HEK293 (cell line): ENCODE measurements at regions of chr10 and their contacts with region 1.

Region 1: DNA sequence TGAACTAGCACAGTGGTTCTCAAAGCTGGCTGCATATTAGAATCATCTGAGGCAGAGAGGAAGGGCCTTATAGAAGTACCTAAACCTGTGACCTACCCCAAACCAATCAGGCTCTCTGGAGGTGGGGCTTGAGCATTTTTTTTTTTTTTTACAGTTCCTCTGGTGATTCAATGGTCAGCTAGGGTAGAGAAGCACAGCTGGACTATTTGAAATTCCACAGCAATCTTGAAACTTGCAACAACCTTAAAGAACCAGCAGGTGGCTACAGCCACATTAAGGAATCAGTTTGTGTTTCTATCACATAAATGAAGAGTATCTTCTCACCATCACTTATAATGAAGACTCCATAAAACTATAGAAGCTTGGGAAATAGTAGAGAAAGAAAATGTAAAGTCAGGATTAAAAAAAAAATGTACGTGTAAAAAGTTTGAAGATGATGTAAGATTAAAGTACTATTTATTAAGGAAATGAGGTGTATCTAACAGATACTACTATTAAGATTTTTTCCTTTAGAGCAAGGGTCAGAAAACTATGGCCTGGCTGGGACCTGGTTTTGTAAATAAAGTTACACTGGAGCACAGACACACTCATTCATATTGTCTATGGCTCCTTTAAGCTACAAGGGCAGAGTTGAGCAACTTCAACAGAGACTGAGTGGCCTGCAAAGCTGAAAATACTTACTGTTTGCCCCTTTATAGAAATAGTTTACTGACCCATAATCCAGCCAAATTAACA is 3.8 kb downstream of the RTKN2 start:
- H3K4me3 ChIP-seq: no peak overlapping the region
- H3K27ac ChIP-seq: no peak overlapping the region
- H3K4me1 ChIP-seq: peaks cover 9% of the 10 kb centered on the region
- CTCF ChIP-seq: 0 out of 2 replicates have a peak, but pooled peaks have one; percentile 27

Region 2: DNA sequence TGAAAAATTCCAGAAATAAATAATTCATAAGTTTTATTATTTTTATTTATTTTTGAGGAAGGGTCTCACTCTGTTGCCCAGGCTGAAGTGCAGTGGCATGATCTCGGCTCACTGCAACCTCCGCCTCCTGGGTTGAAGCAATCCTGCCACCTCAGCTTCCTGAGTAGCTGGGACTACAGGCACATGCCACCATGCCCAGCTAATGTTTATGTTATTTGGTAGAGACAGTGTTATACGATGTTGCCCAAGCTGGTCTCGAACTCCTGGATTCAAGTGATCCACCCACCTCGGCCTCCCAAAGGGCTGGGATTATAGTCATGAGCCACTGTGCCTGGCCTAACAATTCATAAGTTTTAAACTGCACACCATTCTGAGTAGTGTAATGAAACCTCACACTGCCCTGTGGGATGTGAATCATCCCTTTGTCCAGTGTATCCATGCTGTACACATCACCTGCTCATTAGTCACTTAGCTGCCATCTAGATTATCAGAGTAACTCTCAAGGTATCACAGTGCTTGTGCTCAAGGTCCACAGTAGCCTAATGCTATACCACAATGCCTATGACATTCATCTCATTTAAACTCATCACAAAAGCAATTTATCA is 14.2 kb before region 1 on chr10:
- CTCF ChIA-PET with region 1: interaction called, 14 read pairs
- POLR2A ChIA-PET with region 1: interaction called, 3 read pairs
- H3K4me3 ChIP-seq: no peak overlapping the region
- H3K27ac ChIP-seq: no peak overlapping the region
- H3K4me1 ChIP-seq: 0 out of 2 replicates have a peak, but pooled peaks cover 2% of the 10 kb centered on the region
- CTCF ChIP-seq: no peak

Region 3: DNA sequence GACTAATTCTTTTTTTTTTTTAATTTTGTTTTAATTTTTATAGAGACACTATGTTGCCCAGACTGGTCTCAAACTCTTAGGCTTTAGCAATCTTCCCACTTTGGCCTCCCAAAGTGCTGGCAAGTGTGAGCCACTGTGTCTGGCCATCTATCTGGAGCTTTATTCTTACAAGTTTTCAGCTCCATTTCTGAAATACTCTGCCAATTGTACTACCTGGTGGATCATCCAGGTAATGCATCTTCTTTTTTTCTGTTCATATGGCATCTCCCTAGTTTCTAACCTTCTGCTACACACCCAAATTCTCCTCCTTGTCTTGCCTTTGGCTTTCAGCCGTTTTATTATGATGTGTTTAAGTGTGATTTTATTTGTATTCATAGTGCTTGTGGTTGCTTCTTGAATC is 149.5 kb after region 1 on chr10:
- CTCF ChIA-PET with region 1: interaction called, 12 read pairs
- POLR2A ChIA-PET with region 1: no interaction called
- H3K4me3 ChIP-seq: no peak overlapping the region
- H3K27ac ChIP-seq: no peak overlapping the region
- H3K4me1 ChIP-seq: no peaks in the 10 kb centered on the region
- CTCF ChIP-seq: no peak